WTC11 (cell line): ENCODE measurements at regions of chr1 and their contacts with region 1.

Region 1: DNA sequence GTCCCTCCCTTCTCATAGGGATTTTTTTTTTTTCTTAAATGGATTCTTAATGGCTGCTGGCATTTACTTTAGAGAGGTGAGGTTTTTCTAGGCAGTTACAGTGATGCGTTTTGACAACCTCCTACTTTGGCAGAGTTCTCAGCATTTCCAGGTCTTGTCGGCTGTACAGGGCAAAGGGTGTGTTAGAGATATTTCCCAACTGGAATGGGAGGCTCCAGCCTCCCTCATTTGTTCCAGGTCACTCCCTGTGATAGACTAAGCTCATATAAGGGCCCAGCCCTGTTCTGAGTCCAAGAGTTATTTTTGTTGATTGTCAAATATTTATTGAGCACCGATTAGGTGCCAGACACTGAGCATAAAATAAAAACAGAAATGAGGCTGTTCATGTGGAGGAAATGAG is 7.6 kb upstream of the XKR8 start:
- DNase-seq: no peak
- ATAC-seq: no peak
- H3K4me3 Mint-ChIP-seq: no peak overlapping the region
- H3K27ac Mint-ChIP-seq: no peak overlapping the region
- H3K4me1 Mint-ChIP-seq: no peaks in the 10 kb centered on the region
- H3K27me3 Mint-ChIP-seq: no peaks in the 10 kb centered on the region
- CTCF ChIP-seq: no peak

Region 2: DNA sequence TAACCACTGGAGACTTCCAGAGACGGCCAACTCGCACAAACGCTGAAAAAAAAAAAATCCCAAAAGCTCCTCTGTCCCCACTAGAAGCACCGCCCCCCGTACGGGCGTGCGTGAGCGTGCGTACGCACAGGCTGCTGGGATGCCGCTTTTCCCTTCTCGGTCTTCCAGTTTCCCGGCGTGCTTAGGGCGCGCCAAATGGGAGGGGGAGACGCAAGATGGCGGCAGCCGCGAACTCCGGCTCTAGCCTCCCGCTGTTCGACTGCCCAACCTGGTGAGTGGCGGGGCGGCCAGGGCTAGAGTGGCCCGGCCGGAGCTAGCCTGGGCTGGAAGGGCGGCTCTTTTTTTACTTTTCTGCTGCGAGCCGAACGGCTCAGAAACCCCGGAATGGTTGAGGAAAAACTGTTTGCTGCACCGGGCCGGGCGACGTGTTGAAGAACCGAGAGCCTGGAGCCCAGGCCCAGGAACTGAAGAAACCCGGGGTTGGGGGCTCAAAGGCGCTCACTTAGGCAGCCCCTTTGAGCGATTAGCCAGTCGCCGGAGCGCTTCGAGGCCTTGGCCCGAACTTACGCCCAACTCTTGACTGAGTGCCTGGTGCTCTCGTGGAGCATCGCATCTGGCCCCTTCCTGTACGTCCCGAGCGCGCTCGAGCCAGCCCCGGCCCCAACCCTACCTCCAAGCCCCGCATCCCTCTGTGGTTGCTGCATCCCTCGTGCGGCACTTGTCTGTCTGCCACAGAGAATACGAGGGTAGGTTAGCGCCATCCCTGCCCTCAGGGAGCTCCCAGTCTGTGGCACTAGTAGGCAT is 121.3 kb before region 1 on chr1 and contains the start of gene PPP1R8:
- CTCF ChIA-PET with region 1: no interaction called
- POLR2A ChIA-PET with region 1: no interaction called
- DNase-seq: peak; percentile 92
- ATAC-seq: peak; percentile 100
- H3K4me3 Mint-ChIP-seq: peak within 1 kb of the TSS; percentile 94
- H3K27ac Mint-ChIP-seq: peak within 1 kb of the TSS; percentile 98
- H3K4me1 Mint-ChIP-seq: peaks cover 15% of the 10 kb centered on the region
- H3K27me3 Mint-ChIP-seq: no peaks in the 10 kb centered on the region; the same call in 1 of the 2 replicates
- CTCF ChIP-seq: no peak
- total RNA-seq, gene PPP1R8: 39.5 to 43.0 TPM (median 41.9 TPM) in 3 replicates

Region 3: DNA sequence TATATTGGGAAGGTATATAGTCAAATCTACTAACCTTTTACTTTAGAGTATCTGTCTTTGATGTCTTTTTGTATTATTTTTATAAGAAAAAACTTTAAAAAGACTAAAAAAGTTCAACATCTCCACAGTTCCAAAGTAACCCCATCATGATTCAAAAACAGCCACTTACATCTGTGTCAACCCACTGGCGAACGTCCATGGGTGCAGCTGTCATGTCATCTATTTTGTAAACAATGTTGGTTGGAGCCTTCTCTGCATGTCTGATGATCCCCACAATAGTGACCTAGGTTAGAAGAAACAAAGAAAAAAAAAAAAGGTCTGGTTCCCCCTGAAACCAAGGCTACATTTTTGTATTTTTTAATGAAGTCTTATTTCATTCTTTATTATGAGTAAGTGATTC is 45.4 kb before region 1 on chr1:
- CTCF ChIA-PET with region 1: no interaction called
- POLR2A ChIA-PET with region 1: interaction called, 10 read pairs
- DNase-seq: no peak
- ATAC-seq: no peak
- H3K4me3 Mint-ChIP-seq: no peak overlapping the region
- H3K27ac Mint-ChIP-seq: no peak overlapping the region
- H3K4me1 Mint-ChIP-seq: no peaks in the 10 kb centered on the region
- H3K27me3 Mint-ChIP-seq: no peaks in the 10 kb centered on the region
- CTCF ChIP-seq: no peak